ENCODE measurements at regions of chr1 and their contacts with region 1.

Region 1: GRCh38 chr1:173853074-173853473 is 14.7 kb downstream of the GAS5 start:
- DNase-seq: no peak
- CTCF ChIP-seq: no peak

Region 2: GRCh38 chr1:173832748-173833147 is 20.3 kb before region 1 on chr1:
- CTCF ChIA-PET with region 1: no interaction called
- POLR2A ChIA-PET with region 1: no interaction called
- DNase-seq: no peak
- CTCF ChIP-seq: no peak

Region 3: GRCh38 chr1:173867753-173868265 is 14.7 kb after region 1 on chr1 and contains the start of gene GAS5:
- CTCF ChIA-PET with region 1: interaction called, 13 read pairs
- POLR2A ChIA-PET with region 1: interaction called, 11 read pairs
- DNase-seq: peak; percentile 95
- CTCF ChIP-seq: no peak

Measured in GM10248 (cell line).